ENCODE measurements at regions of chr4 and their contacts with region 1.

Region 1: GRCh38 chr4:87235020-87235671 is 14.7 kb upstream of the KLHL8 start:
- DNase-seq: no peak
- H3K4me3 ChIP-seq: peak overlapping the region; percentile 42 to 63 (median 49)
- H3K27ac ChIP-seq: no peak overlapping the region
- H3K4me1 ChIP-seq: no peaks in the 10 kb centered on the region
- H3K27me3 ChIP-seq: no peaks in the 10 kb centered on the region
- CTCF ChIP-seq: no peak
- POLR2A ChIP-seq: no peak

Region 2: DNA sequence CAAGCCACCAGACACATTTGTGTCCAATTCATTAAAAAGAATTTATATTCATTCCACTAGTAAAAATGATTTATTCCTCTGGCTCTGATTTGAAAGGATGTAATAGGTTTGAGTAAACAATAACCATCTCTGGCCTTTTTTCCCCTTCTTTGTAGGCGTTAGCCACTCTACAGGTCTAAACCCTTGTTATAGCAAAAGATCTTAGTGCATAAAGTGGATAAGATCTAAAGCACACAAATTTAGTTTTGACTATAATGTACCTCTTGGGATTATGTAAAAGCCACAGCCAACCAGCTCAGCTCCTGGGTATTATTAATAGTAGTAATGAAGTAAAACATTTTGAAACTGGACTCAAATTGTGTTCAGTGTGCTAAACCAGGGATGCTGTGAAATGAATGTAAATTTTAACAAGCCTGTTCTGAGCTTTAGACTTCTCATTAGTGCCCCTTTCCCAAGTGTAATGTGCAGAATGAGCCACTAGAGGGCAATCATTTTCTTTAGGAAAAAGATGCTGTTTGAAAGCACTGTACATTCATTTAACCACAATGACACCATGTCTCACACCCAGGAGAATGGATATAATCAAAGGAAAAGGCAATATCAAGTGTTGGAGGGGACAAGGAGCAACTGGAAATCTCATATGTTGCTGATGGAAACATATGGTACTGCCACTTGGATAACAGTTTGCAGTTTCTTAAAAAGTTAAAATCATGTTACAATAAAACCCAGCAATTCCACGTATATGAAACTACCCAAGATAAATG is 84.5 kb before region 1 on chr4:
- intact Hi-C with region 1: loop called (anchors 10 kb)
- DNase-seq: no peak
- H3K4me3 ChIP-seq: no peak overlapping the region
- H3K27ac ChIP-seq: no peak overlapping the region
- H3K4me1 ChIP-seq: no peaks in the 10 kb centered on the region
- H3K27me3 ChIP-seq: no peaks in the 10 kb centered on the region
- CTCF ChIP-seq: peak; percentile 80 to 91 (median 89)
- POLR2A ChIP-seq: no peak

Measured in breast epithelium (tissue), 4 donors.